Heart right ventricle (tissue), 16 donors: ENCODE measurements at regions of chr6 and their contacts with region 1.

Region 1: GRCh38 chr6:41779793-41780545 is at the start of gene FRS3:
- DNase-seq: peak; percentile 98 to 100
- ATAC-seq: peak; percentile 92 to 97 (median 94)
- H3K4me3 ChIP-seq: peak within 1 kb of the TSS; percentile 65 to 99 (median 90)
- H3K27ac ChIP-seq: peak within 1 kb of the TSS; percentile 66 to 99 (median 94)
- H3K4me1 ChIP-seq: peaks cover 11 to 59% (median 35%) of the 10 kb centered on the region in 9 donors
- H3K27me3 ChIP-seq: no peaks in the 10 kb centered on the region
- CTCF ChIP-seq: peak; percentile 87 to 98 (median 94)
- total RNA-seq, gene FRS3: 4.1 to 8.7 (median 5.8) TPM

Region 2: GRCh38 chr6:41406728-41407489 is 373.1 kb before region 1 on chr6:
- intact Hi-C with region 1: no loop called
- DNase-seq: peak; percentile 29 to 55
- ATAC-seq: peak; percentile 61 to 93 (median 72)
- H3K4me3 ChIP-seq: no peak overlapping the region
- H3K27ac ChIP-seq: no peak overlapping the region
- H3K4me1 ChIP-seq: peaks cover 0 to 5% (median 0%) of the 10 kb centered on the region in 9 donors
- H3K27me3 ChIP-seq: peaks cover 0 to 60% (median 45%) of the 10 kb centered on the region in 7 donors
- CTCF ChIP-seq: no peak

Region 3: GRCh38 chr6:41602864-41603608 is 176.9 kb before region 1 on chr6:
- intact Hi-C with region 1: loop called in 6 of 10 experiments (anchors 5 to 10 kb)
- DNase-seq: peak; percentile 70 to 88
- ATAC-seq: peak; percentile 73 to 93 (median 84)
- H3K4me3 ChIP-seq: peak overlapping the region in 7 of 10 donors; percentile 5 to 30 (median 24)
- H3K27ac ChIP-seq: peak overlapping the region in 5 of 10 donors; percentile 20 to 49 (median 36)
- H3K4me1 ChIP-seq: peaks cover 0 to 17% (median 8%) of the 10 kb centered on the region in 9 donors
- H3K27me3 ChIP-seq: no peaks in the 10 kb centered on the region
- CTCF ChIP-seq: peak; percentile 84 to 98 (median 90)

Region 4: GRCh38 chr6:41697861-41698781 is 81.8 kb before region 1 on chr6:
- intact Hi-C with region 1: loop called in 2 of 10 experiments (anchors 10 kb)
- DNase-seq: peak in 1 of 2 donors; percentile 51
- ATAC-seq: peak in 6 of 8 donors; percentile 30 to 76 (median 56)
- H3K4me3 ChIP-seq: no peak overlapping the region
- H3K27ac ChIP-seq: peak overlapping the region in 9 of 10 donors; percentile 65 to 93 (median 79)
- H3K4me1 ChIP-seq: peaks cover 6 to 94% (median 46%) of the 10 kb centered on the region in 9 donors
- H3K27me3 ChIP-seq: no peaks in the 10 kb centered on the region
- CTCF ChIP-seq: no peak

Region 5: DNA sequence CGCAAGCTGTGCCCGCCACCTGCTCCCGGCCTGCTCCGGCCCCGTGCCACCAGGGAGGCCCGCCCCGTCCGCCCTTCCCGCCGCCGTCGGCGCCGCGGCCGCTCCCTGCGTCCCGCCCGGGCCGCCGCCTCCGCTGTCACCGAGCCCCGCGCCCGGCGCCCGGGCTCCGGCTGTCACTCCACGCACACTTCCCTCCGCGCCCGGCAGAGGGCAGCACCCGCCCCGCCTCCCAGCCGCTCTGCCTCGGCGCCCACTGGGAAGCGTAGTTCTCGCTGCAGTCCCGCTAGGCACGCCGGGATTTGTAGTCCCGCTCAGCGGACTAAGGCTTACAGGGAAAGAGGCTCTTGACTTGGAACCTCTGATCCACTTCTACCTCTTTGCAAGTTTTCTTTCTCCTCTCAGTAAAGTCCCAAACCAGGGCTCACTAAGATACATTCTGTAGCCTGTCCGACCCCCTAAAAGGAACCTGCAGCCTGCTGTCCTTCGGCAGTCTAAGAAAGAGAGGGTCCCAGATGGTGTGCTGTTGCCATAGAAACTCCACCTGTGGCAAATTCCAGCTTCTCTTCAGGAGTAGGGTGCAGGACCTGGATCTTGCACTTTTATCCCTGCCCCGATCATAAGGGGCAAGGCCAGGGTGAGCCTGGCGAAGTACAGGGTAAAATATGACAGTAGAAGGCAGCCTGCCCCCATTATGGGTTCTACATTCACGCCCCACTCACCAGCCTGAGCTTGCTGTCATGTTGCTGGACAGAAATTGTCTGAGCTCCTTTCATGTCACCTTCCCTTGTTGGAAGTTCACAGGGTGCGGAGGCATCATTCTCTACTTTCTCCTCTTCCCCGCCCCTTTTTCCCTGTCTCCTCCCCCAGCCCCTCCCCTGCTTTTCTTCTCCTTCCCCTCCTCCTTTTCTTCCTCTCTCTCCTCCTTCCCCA is 44.3 kb before region 1 on chr6 and contains the start of gene TFEB:
- intact Hi-C with region 1: loop called in 4 of 10 experiments (anchors 5 kb)
- DNase-seq: peak; percentile 95
- ATAC-seq: peak; percentile 54 to 81 (median 72)
- H3K4me3 ChIP-seq: peak within 1 kb of the TSS; percentile 75 to 99 (median 92)
- H3K27ac ChIP-seq: peak within 1 kb of the TSS; percentile 97 to 100 (median 100)
- H3K4me1 ChIP-seq: peaks cover 11 to 41% (median 36%) of the 10 kb centered on the region in 9 donors
- H3K27me3 ChIP-seq: no peaks in the 10 kb centered on the region
- CTCF ChIP-seq: peak; percentile 85 to 100 (median 88)
- total RNA-seq, gene TFEB: 29.2 to 47.0 (median 39.6) TPM

Region 6: DNA sequence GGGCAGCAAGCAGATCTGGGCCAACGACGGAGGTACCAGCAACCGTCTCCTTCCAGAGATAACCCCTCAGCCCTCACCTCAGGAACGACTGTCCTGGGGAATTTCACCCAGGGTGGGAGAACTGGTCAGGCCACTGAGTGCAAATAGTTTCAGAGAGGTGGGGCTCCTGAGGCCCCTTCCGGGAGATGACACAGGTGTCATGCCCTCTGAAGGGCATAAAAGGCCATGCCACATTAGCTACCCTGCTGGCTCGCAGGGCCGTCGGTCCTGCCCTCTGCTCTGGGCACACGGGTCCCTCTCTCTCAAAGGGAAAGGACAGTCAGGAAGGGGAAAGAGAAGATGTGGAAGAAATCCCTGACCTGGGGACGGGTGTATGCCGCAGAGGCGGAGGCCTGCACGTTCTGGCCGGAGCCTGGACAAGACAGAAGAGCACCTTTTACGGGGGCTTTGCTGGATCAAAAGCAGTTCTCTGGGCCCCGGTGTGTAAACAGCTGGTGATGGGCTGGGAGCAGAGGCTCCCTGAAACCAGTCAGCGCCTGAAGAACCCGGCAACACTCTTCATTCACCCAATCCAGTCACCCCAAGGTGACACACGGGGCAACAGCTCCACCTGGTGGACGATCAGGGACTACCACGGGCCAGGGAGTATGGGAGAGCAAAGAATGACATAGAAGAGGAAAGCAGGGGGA is 264.0 kb after region 1 on chr6:
- intact Hi-C with region 1: loop called (anchors 1 to 5 kb)
- DNase-seq: peak; percentile 90 to 91
- ATAC-seq: peak; percentile 68 to 86 (median 76)
- H3K4me3 ChIP-seq: peak overlapping the region in 6 of 10 donors; percentile 5 to 28 (median 16)
- H3K27ac ChIP-seq: peak overlapping the region in 9 of 10 donors; percentile 10 to 98 (median 92)
- H3K4me1 ChIP-seq: peaks cover 31 to 95% (median 83%) of the 10 kb centered on the region in 9 donors
- H3K27me3 ChIP-seq: no peaks in the 10 kb centered on the region
- CTCF ChIP-seq: peak; percentile 92 to 97 (median 96)

Region 7: DNA sequence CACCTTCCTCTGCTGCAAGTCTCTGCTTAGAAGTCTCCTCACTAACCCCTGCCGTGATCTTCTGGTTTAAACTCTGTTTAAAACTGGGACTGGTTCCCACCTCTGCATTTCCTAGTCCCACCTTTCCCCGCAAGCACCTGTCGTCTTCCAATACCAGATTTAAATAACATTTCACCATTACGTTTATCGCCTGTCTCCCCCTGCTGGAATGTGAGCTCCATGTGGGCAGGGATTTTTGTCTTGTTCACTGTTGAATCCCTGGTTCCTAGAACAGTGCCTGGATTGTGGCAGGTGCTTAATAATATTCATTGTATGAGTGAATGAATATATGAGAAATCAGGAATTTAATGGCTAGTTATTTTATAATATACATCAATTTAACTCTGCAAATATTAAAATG is 395.9 kb after region 1 on chr6:
- intact Hi-C with region 1: loop called in 1 of 10 experiments (anchors 10 kb)
- DNase-seq: no peak
- ATAC-seq: no peak
- H3K4me3 ChIP-seq: no peak overlapping the region
- H3K27ac ChIP-seq: no peak overlapping the region
- H3K4me1 ChIP-seq: peaks cover 0 to 6% (median 0%) of the 10 kb centered on the region in 9 donors
- H3K27me3 ChIP-seq: peaks cover 0 to 21% (median 11%) of the 10 kb centered on the region in 7 donors
- CTCF ChIP-seq: peak in 1 of 9 donors; percentile 11